ENCODE measurements at regions of chrX and their contacts with region 1.

Region 1: GRCh38 chrX:42837747-42838146 is 59.8 kb upstream of the PPP1R2C start:
- DNase-seq: no peak
- H3K4me3 Mint-ChIP-seq: no peak overlapping the region
- H3K27ac Mint-ChIP-seq: no peak overlapping the region
- H3K4me1 Mint-ChIP-seq: no peaks in the 10 kb centered on the region
- H3K27me3 Mint-ChIP-seq: no peaks in the 10 kb centered on the region

Region 2: DNA sequence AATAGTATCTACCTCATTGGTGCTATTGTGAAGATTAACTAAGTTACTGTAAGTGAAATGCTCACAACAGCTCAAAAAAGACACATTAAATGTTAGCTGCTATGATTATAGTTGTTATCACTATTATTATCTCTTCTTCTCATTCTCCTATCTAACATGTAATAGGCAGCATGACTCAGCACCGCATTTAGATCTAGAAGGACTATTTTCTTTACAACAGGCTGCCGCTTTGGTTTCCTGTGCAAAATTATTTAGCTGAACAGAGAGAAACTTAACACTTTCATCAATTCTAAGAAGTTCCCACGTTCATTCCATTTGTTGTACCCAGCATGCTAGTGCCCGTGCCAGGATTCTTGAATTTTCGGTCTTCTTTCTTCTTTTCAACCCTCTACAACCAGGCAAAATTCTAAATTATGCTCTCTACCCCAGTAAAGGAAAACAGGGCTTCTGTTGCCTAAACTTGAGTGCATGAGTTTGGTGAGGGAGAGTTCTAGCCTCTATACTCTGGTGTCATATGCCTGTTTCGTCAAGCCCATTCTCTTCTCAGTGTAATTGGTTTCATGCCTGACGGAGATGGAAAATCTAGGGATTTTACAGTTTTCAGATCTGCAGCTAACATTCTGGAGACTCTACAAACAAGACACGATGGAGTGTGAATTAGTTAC is 438.6 kb before region 1 on chrX:
- intact Hi-C with region 1: no loop called
- DNase-seq: no peak
- H3K4me3 Mint-ChIP-seq: no peak overlapping the region
- H3K27ac Mint-ChIP-seq: no peak overlapping the region
- H3K4me1 Mint-ChIP-seq: peaks cover 10% of the 10 kb centered on the region
- H3K27me3 Mint-ChIP-seq: no peaks in the 10 kb centered on the region

Region 3: GRCh38 chrX:42869659-42870476 is 32.1 kb after region 1 on chrX:
- intact Hi-C with region 1: loop called (anchors 2 kb)
- DNase-seq: no peak
- H3K4me3 Mint-ChIP-seq: no peak overlapping the region
- H3K27ac Mint-ChIP-seq: no peak overlapping the region
- H3K4me1 Mint-ChIP-seq: peaks cover 4% of the 10 kb centered on the region
- H3K27me3 Mint-ChIP-seq: no peaks in the 10 kb centered on the region

Measured in activated T-helper 2 cell treated with anti-CD3 and anti-CD28 coated beads, Interferon-gamma antibody, Interleukin-2, Interleukin-4, amounts not matched to agents 10 μg/mL and 5 μg/mL and 100 μg/mL, durations not matched to agents 14 hours and 24 hours and 36 hours (primary cell).